A549 (cell line): ENCODE measurements at regions of chr12 and their contacts with region 1.

Region 1: DNA sequence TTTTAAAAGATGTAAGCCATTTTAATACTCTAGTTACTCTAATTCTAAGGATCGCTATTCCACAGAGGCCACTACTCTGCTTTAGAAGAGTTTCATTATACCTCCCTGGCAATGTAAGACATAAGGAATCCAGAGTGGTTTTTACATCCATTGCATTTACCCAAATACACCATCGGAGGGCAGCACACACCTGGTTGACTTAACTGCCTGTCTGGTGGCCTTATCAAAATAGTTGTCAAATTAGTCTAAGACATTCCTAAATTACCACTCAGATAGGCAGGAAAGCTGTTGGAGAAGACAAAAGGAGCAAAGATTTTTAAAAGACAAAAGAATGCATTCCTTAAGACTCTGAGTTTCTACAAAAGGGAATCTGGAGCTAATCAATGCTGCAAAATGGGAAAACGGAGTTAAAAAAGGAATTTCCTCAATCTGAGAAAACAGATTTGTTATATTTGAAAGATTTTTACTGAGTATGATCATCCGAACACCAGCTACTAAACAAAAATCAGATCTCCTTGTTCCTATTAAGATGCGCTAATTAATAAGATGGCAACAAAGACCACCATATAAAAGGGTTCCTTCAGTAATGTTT is 33.8 kb upstream of the FGD4 start:
- DNase-seq: peak; percentile 49 to 81
- ATAC-seq: peak; percentile 76 to 85; a peak in 5 of 6 replicates
- H3K4me3 ChIP-seq: no peak overlapping the region
- H3K27ac ChIP-seq: no peak overlapping the region; a peak in 1 of 6 replicates
- H3K4me1 ChIP-seq: peaks cover 15% of the 10 kb centered on the region; the same call in 2 of the 3 replicates
- CTCF ChIP-seq: peak; percentile 91
- EP300 ChIP-seq: no peak
- POLR2A ChIP-seq: no peak
- RAD21 ChIP-seq: peak; percentile 94 to 96

Region 2: GRCh38 chr12:32353540-32353939 is 12.0 kb before region 1 on chr12:
- CTCF ChIA-PET with region 1: interaction called, 16 read pairs
- POLR2A ChIA-PET with region 1: no interaction called
- DNase-seq: no peak
- ATAC-seq: no peak
- H3K4me3 ChIP-seq: no peak overlapping the region
- H3K27ac ChIP-seq: no peak overlapping the region
- H3K4me1 ChIP-seq: no peaks in the 10 kb centered on the region
- CTCF ChIP-seq: no peak
- EP300 ChIP-seq: no peak
- POLR2A ChIP-seq: no peak
- RAD21 ChIP-seq: no peak

Region 3: DNA sequence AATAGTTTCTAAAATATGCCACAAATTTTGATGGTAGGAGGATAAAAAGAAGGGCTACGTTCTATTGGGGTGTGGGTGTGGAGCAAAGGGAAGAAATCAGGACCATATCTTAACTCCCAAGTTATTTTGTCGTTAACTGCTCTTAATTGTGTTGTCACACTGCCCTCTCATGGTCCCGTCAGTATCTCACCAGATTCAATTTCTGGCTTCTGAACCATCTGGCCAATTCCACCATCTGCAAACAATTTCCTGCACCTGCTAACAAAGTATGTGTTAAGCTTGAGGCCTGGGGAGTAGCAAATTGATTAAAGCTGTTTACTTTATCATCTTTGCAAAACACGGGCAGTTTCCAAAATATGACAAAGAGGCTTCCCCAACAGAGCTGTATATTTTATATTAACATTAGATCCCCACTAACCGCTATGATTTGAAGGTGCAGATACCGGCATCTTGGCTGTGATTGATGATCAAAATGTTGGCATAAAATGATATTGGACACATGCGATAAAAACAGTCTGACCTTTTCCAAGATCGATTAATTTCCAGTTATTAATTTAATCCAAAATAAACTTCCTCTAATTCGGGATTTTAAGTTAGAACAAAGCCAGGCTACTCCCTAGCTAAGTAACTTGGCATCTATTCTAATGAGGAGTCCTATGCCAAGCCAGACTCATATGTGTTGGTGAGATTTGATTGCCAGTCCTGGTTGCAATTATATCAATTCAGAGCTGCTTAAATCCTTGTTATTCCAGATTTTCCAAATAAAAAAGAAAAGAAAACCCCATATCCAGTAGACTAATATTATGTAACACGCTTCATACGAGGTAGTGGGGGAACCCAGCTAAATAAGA is 306.6 kb after region 1 on chr12:
- CTCF ChIA-PET with region 1: interaction called, 137 read pairs
- POLR2A ChIA-PET with region 1: no interaction called
- DNase-seq: peak; percentile 61 to 73
- ATAC-seq: peak; percentile 87 to 90
- H3K4me3 ChIP-seq: no peak overlapping the region
- H3K27ac ChIP-seq: no peak overlapping the region
- H3K4me1 ChIP-seq: no peaks in the 10 kb centered on the region
- CTCF ChIP-seq: peak; percentile 80
- EP300 ChIP-seq: no peak
- POLR2A ChIP-seq: no peak
- RAD21 ChIP-seq: peak; percentile 90 to 93